Adrenal gland (tissue), 19 donors: ENCODE measurements at regions of chr18 and their contacts with region 1.

Region 1: DNA sequence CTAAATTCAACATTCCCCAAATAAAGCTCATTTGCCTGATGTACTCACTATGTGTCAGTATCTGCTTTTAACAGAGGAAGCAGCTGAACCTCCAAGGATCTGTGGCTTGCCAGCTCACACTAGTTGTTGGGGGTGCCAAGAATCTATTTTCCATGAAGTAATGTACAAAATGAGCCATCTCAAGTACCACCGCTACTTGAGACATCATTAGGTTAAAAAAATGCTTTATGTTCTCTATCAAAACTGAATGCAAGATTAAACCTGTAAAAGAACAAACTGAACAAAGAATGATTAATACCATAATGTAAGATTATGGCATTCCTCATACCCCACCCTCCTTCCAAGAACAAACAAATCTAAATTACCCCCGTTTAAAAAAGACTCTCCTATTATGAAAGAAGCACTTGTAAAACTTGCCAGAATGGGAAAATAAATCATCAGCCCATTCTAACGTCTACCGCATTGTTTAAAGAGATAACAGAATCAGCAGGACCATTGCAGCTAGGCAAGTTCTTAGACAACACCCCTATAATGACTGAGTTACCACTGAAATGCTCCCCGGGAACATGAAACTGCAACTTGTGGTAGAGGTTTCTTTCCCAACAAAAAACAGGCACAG is 471.6 kb downstream of the DLGAP1 start:
- DNase-seq: peak in 1 of 7 donors; percentile 12
- H3K4me3 ChIP-seq: no peak overlapping the region
- H3K27ac ChIP-seq: no peak overlapping the region
- H3K4me1 ChIP-seq: peaks cover 0 to 17% of the 10 kb centered on the region in 2 donors
- H3K27me3 ChIP-seq: no peaks in the 10 kb centered on the region
- CTCF ChIP-seq: no peak
- POLR2A ChIP-seq: no peak

Region 2: DNA sequence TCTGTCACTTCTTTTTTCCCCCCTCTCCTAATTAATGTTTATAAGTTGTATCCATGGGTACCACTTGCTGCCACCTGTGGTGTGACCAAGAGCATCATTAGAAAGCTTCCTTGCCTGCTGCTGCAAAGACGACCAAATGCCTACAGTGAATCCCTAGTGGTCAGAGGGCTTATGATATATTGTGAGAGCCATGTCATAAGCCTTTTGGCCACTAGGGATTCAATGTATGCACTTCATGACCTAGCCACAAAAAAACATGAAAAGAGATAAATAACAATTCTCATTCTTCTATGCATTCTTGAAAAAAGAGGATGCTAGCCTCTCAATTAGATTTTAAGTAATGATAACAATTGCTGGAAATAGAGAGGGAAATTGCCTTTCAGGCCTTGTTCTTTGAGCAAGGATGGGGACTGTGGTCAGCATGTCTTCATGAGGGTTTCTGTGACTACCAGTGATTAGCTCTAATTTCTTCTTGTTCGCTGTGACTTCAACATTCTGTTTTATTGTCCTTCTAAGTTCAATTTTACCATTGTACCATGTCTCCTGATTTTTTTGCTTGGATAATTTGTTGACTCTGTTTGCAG is 98.2 kb before region 1 on chr18:
- intact Hi-C with region 1: loop called in 1 of 2 experiments (anchors 10 kb)
- DNase-seq: no peak
- H3K4me3 ChIP-seq: no peak overlapping the region
- H3K27ac ChIP-seq: no peak overlapping the region
- H3K4me1 ChIP-seq: peaks cover 8 to 13% of the 10 kb centered on the region in 2 donors
- H3K27me3 ChIP-seq: no peaks in the 10 kb centered on the region
- CTCF ChIP-seq: peak in 3 of 6 experiments; percentile 10 to 15 (median 12)
- POLR2A ChIP-seq: no peak